ENCODE measurements at regions of chr1 and their contacts with region 1.

Region 1: GRCh38 chr1:111619635-111620440 is at the start of gene RAP1A:
- DNase-seq: peak; percentile 93
- H3K4me3 ChIP-seq: peak within 1 kb of the TSS; percentile 37 to 98 (median 84)
- H3K27ac ChIP-seq: peak within 1 kb of the TSS; percentile 52
- H3K4me1 ChIP-seq: peaks cover 12% of the 10 kb centered on the region
- H3K27me3 ChIP-seq: peaks cover 0 to 4% of the 10 kb centered on the region in 2 experiments
- CTCF ChIP-seq: no peak
- POLR2A ChIP-seq: peak; percentile 39
- total RNA-seq, gene RAP1A: 56.4 and 57.1 TPM in 2 replicates

Region 2: GRCh38 chr1:111516005-111516535 is 103.8 kb before region 1 on chr1:
- CTCF ChIA-PET with region 1: interaction called, 4 read pairs
- POLR2A ChIA-PET with region 1: no interaction called
- dilution Hi-C with region 1: no loop called
- intact Hi-C with region 1: loop called (anchors 2 kb)
- DNase-seq: peak; percentile 75
- H3K4me3 ChIP-seq: peak overlapping the region in 2 of 3 experiments; percentile 3 to 15
- H3K27ac ChIP-seq: peak overlapping the region; percentile 71
- H3K4me1 ChIP-seq: peaks cover 28% of the 10 kb centered on the region
- H3K27me3 ChIP-seq: no peaks in the 10 kb centered on the region
- CTCF ChIP-seq: peak; percentile 37 to 49
- POLR2A ChIP-seq: no peak

Region 3: DNA sequence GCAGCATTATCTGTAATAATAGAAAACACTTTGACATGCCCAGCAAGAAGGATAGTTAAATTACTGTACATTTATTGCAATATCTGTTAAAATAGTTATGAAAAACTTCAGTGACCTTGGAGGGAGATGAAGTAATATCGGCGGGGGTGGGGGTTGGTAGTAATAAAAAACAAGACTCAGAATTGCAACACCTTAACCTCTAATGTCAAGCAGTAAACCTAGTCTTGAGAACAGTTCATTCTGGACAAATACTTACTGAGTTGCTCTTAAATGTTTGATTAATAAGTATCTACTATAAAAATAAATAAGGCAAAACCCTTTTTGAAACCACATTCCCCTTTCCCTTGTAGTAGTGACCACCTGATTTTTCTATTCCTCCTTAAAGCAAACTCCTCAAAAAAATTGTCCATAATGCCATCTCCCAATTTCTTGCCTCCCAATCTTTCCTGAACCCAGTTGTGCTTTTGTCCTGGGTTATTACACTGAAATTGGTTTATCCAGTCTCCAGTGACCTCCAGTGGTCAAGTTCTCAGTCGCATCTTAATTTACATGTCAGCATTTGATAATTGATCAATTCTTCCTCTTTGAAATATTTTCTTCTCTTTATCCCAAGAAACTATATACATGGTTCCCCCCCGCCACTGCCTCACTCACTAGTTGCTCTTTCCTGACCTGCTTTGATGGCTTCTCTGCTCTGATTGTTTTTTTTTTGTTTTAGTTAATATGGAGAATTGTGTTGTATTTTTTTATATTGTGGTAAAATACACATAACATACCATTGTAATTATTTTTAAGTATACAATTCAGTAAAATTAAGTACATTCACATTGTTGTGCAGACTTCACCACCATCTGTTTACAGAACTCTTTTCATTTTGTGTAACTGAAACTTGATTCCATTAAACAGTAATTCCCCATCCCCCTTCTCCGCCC is 36.5 kb after region 1 on chr1:
- CTCF ChIA-PET with region 1: no interaction called
- POLR2A ChIA-PET with region 1: no interaction called
- dilution Hi-C with region 1: no loop called
- intact Hi-C with region 1: loop called (anchors 1 kb)
- DNase-seq: peak; percentile 67
- H3K4me3 ChIP-seq: no peak overlapping the region
- H3K27ac ChIP-seq: no peak overlapping the region
- H3K4me1 ChIP-seq: no peaks in the 10 kb centered on the region
- H3K27me3 ChIP-seq: no peaks in the 10 kb centered on the region
- CTCF ChIP-seq: peak; percentile 16 to 35
- POLR2A ChIP-seq: no peak

Region 4: DNA sequence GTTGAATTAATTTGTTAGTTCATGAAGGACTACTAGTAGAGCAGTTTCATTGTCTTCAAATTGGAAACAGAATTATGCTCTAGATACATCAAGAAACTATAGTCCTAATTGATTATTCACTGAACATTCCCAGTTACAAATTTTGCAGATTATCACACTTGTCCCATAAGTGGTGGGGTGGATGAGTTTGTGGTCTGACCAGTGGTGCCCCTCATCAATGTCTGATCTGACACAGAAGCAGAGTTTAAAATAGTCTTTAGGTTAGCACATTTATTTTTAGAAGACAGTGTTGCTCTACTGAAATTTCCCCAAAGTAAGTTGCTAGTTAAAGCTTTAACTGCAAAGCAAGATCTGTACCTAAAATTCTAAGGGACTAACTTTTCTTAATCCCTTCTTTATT is 76.5 kb after region 1 on chr1:
- CTCF ChIA-PET with region 1: no interaction called
- POLR2A ChIA-PET with region 1: no interaction called
- dilution Hi-C with region 1: no loop called
- intact Hi-C with region 1: loop called (anchors 5 kb)
- DNase-seq: no peak
- H3K4me3 ChIP-seq: no peak overlapping the region
- H3K27ac ChIP-seq: no peak overlapping the region
- H3K4me1 ChIP-seq: no peaks in the 10 kb centered on the region
- H3K27me3 ChIP-seq: no peaks in the 10 kb centered on the region
- CTCF ChIP-seq: no peak
- POLR2A ChIP-seq: no peak

Measured in endothelial cell of umbilical vein (primary cell).